Dendritic cell treated with granulocyte-macrophage colony-stimulating factor and Interleukin-4, amounts not matched to agents 40 ng/mL and 50 ng/mL, for 4 days (primary cell): ENCODE measurements at regions of chr20 and their contacts with region 1.

Region 1: DNA sequence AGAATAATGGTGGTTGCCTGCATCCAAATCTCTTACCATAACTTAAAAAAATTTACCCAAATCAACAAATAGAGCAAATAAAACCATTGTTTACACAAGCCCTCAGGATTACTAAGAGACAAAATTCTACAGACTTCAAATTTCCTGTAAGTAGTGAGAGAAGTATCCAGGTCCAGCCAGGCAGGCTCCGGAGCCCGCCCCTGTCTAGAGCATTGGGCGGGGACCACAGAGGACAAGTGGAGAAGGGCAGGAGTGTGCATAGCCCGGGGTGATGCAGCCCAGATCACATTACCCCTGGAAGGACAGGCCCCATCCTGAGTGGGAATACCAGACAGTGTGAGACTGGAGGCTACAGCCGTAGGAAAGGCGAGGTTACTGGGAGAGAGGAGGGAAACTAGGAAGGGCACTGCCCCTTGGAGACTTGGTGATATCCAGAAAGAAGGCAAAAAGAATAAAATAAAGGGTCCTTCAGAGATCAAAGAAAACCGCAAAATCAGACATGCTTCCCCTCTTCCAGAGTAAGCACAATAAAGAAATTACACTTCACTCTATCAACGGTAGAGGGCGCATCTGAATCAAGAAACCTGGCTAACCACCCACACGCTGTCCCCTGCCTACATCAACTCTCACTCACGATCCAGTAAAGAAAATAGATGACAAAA is 26.6 kb downstream of the RIN2 start:
- H3K4me3 Mint-ChIP-seq: peak overlapping the region; percentile 13
- H3K27ac Mint-ChIP-seq: peak overlapping the region; percentile 33
- H3K4me1 Mint-ChIP-seq: peaks cover 39% of the 10 kb centered on the region
- H3K27me3 Mint-ChIP-seq: no peaks in the 10 kb centered on the region

Region 2: DNA sequence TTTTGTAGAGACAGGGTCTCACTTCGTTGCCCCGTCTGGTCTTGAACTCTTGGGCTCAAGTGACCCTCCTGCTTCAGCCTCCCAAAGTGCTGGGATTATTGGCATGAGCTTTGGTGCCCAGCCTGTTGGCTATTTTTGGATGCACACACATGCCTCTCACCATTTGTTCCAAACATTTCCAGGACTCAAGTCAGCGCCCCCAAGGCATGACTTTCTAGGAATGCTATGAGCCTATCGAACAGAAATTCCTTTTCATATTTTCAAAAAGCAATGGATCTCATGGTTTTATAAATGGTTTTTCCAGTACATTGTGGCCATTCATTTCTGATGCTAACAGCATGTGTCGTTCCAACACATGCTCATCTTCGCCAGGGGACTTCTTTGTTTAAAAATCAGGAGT is 113.2 kb after region 1 on chr20:
- intact Hi-C with region 1: loop called (anchors 5 kb)
- H3K4me3 Mint-ChIP-seq: no peak overlapping the region
- H3K27ac Mint-ChIP-seq: no peak overlapping the region
- H3K4me1 Mint-ChIP-seq: peaks cover 16% of the 10 kb centered on the region
- H3K27me3 Mint-ChIP-seq: no peaks in the 10 kb centered on the region

Region 3: GRCh38 chr20:19995220-19995863 is 210.7 kb after region 1 on chr20:
- intact Hi-C with region 1: loop called (anchors 5 kb)
- H3K4me3 Mint-ChIP-seq: no peak overlapping the region
- H3K27ac Mint-ChIP-seq: peak overlapping the region; percentile 28
- H3K4me1 Mint-ChIP-seq: peaks cover 73% of the 10 kb centered on the region
- H3K27me3 Mint-ChIP-seq: no peaks in the 10 kb centered on the region